ENCODE measurements at regions of chr2 and their contacts with region 1.

Region 1: DNA sequence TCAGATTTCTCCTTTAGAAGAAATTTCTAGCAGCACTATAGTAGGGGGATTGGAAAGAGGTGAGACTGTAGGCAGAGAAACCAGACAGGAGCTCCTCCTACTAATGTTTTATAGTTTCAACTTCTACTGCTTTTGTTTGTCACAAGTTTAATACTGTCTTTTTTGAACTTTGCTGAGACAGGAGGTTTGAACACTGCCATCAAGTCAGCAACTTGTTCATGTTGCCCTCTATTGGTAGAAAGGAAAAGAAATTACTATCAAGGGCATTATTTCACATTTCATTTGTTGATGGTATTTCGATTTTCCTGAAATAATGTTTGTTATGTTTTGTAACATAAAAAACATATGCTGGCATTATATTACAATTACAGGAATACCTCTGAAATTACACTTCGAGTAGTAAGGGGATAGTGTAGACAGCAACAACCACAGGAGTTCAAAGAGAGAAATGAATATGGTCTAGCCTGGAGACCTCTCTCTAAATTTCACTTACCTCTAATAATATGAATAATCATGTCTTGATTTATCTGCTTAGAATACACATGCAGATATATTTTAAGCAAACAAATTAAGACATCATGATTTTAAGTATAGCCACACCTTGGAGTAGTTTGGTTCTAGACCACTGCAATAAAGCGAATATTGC is 12.4 kb upstream of the CCDC88A start:
- DNase-seq: no peak
- H3K4me3 ChIP-seq: no peak overlapping the region
- H3K27ac ChIP-seq: peak overlapping the region in 1 of 2 donors; percentile 0
- H3K4me1 ChIP-seq: no peaks in the 10 kb centered on the region
- H3K27me3 ChIP-seq: no peaks in the 10 kb centered on the region
- CTCF ChIP-seq: peak; percentile 67

Region 2: GRCh38 chr2:54384301-54385203 is 1047.6 kb before region 1 on chr2:
- intact Hi-C with region 1: no loop called
- DNase-seq: no peak
- H3K4me3 ChIP-seq: no peak overlapping the region
- H3K27ac ChIP-seq: no peak overlapping the region
- H3K4me1 ChIP-seq: peaks cover 0 to 17% (median 12%) of the 10 kb centered on the region in 4 donors
- H3K27me3 ChIP-seq: no peaks in the 10 kb centered on the region
- CTCF ChIP-seq: no peak

Region 3: DNA sequence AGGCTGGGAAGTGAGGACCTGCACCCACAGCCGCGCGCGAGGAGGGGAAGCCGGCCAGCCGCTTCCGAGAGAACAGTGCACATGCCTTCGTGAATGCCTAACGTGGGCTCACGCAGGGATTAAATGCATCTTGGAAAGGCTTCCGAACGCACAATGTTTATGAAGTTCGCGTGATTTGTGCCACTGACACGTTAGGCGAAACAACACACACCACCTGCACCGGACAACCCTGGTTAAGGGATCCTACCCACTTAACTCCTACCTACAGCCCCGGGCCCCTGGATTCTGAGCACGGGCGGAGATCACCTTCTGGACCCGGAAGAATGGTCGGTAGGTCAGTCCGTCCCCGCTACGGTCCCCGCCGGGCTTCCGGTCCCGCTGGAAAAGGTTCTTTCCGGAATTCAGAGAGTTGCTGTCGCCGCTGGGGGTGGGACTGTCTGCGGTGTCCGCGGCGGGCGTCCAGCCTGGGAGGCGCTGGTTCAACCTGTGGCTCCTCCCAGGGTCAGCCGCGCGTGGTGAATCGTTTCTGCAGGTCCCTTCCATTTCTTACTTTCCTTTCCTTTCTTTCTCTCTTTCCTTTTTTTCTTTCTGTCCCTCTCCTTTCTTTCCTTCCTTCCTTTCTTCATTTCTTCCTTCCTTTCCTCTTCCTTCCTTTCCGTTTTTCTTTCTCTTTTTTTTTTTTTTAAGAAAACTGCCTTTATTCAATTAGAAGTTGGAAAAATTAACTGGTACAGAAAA is 163.0 kb before region 1 on chr2 and contains the start of gene MTIF2:
- intact Hi-C with region 1: loop called (anchors 5 kb)
- DNase-seq: peak; percentile 96 to 98
- H3K4me3 ChIP-seq: peak within 1 kb of the TSS; percentile 65 to 82
- H3K27ac ChIP-seq: peak within 1 kb of the TSS; percentile 86 to 87
- H3K4me1 ChIP-seq: peaks cover 0 to 15% (median 10%) of the 10 kb centered on the region in 4 donors
- H3K27me3 ChIP-seq: no peaks in the 10 kb centered on the region
- CTCF ChIP-seq: peak in 1 of 2 experiments; percentile 22

Region 4: DNA sequence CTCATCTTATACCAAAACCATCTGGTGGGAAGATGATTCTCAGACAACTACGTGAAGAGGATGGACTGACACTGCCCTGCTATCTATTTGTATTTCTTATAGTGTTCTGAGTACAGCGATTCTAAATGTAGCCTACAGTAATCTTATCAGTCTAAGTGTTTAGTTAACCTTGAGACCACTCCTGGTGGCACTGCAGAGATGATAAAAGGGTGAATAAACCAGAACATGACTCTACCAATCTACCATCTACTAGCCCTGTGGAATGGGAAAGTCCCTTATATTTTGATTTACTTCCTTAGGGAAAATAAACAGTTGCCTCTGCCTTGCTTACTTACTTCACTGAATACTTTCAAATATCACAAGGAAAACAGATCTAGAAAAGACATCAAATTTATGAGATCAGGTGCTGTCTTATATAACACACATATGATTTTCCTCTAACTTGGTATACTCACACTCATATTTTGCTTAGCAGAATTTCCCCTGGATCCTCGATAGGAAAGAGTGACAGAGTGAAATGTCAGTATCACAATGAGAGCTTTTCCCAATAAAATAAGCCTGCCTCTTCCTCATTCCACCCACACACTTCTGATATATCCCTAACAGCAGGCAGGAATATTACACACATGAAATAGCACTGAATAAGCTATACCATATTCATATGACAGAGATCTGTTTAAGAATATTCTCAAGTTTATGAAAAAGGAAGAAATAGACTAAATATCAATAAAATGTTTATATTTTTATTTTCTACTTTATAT is 104.5 kb before region 1 on chr2:
- intact Hi-C with region 1: loop called (anchors 10 kb)
- DNase-seq: no peak
- H3K4me3 ChIP-seq: no peak overlapping the region
- H3K27ac ChIP-seq: no peak overlapping the region
- H3K4me1 ChIP-seq: no peaks in the 10 kb centered on the region
- H3K27me3 ChIP-seq: no peaks in the 10 kb centered on the region
- CTCF ChIP-seq: no peak

Region 5: DNA sequence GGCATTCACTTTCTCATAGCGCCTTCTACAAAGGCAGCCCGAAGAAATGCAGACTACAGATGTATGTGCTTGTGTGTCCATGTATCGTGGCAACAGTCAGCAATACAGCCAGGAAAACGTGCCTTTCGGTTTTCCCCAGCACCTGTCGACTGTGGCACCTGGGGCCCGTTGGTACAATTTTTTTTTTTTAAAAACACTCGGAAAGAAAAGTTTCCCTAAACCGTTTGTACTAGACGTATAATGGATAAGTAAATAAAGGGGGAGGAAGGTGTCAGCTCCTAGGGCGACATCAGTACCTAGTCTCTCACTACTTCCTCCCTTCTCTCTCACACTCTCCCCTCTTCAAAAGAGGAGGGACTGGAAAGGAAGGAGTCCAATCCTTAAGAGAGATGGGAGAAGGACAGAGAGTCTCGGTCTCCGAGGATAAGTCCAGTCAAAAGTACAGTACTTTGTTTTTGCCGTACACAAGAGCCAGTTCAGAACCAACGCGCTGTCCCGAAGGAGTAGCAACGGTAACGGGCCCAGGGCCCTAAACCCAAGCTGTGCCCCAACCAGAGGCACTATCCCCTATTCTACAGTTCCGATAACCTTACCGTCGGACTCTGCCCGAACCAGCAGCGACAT is 184.6 kb after region 1 on chr2:
- intact Hi-C with region 1: no loop called
- DNase-seq: no peak
- H3K4me3 ChIP-seq: peak overlapping the region; percentile 73 to 98
- H3K27ac ChIP-seq: peak overlapping the region; percentile 98 to 100
- H3K4me1 ChIP-seq: peaks cover 0 to 47% (median 26%) of the 10 kb centered on the region in 4 donors
- H3K27me3 ChIP-seq: no peaks in the 10 kb centered on the region
- CTCF ChIP-seq: no peak

Measured in tibial artery (tissue), 4 donors.